ENCODE measurements at regions of chr3 and their contacts with region 1.

Region 1: GRCh38 chr3:72665701-72666443 is 182.4 kb downstream of the SHQ1 start:
- DNase-seq: peak; percentile 50
- H3K4me3 ChIP-seq: no peak overlapping the region
- H3K27ac ChIP-seq: no peak overlapping the region
- H3K4me1 ChIP-seq: no peaks in the 10 kb centered on the region
- H3K27me3 ChIP-seq: no peaks in the 10 kb centered on the region
- CTCF ChIP-seq: peak; percentile 61
- POLR2A ChIP-seq: no peak

Region 2: DNA sequence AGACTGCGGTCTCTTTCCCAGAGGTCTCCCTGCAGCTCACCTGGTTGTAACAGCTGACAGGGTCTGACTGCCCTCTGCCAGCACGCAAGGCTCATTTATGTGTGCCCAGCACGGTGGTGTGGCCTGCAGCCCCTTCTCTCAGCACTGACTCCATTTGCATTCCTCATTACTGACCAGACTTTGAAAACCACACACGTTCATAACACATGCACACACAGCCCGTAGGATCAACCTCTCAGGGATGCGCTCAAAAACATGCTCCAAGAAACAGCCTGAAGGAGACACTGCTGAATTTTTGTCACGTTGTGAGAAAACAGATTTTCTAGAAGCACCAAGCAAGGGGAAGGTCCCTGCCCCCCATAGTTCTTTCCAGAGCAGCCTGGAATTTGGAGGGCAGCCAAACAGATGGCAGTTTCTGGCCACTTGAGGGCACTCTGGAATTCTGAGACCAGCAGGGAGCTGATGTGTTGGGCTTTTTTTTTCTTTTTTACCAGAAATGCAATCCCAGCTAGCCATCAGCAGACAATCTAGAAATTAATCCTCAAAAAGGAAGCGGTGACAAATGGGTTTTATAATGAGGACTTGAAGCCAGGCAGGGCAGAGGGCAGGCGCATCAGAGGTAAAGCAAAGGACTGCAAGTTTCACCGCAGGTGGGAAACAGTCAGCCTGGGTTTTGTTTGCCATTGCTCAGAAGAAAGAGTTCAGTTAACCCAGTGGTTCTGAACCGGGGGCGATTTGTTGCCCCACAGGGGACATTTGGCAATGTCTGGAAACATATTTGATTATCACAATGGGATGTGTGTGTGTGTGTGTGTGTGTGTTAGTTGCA is 710.4 kb before region 1 on chr3:
- CTCF ChIA-PET with region 1: interaction called, 19 read pairs
- POLR2A ChIA-PET with region 1: no interaction called
- dilution Hi-C with region 1: no loop called
- intact Hi-C with region 1: no loop called
- DNase-seq: peak; percentile 77
- H3K4me3 ChIP-seq: no peak overlapping the region
- H3K27ac ChIP-seq: no peak overlapping the region
- H3K4me1 ChIP-seq: no peaks in the 10 kb centered on the region
- H3K27me3 ChIP-seq: peaks cover 0 to 9% of the 10 kb centered on the region in 2 experiments
- CTCF ChIP-seq: peak; percentile 65 to 77
- POLR2A ChIP-seq: no peak